Cardiac septum (tissue), 1 donor: ENCODE measurements at regions of chr1 and their contacts with region 1.

Region 1: DNA sequence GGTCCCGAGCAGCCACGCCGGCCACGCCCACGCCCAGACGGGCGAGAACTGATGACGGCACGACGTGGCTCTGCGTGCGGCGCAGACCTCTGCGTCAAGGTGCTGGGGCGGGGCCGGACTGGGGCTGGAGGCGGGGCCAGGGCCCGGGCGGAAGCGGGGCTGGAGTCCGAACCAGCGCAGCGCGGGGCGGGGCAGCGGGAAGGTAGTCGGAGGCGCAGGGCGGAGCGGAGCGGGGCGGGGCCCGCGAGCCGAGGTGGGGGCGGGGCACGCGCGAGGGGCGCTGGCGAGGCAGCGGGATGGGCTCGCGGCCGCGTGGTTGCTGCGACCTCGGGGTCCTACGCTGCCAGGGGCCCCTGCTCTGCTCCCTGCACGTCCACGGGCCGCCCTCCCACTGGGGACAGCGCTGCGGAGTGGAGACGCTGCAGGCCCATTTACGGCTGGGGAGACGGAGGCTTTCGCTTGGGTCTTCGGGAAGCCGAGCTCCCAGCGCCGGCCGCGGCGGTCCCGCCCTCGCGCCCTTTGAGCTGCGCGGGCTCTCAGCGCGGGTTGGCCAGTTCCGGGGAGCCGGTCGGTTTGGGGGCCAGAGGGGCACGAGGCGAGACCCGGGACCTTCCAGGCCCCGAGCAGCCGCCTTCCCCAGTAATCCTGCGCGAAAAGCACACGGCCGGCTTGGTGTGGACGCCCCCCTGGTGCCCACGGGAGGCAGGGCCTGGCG is at the start of gene PEX10:
- DNase-seq: peak; percentile 99
- total RNA-seq, gene PEX10: 18.1 TPM

Region 2: GRCh38 chr1:2360588-2361364 is 51.9 kb before region 1 on chr1:
- intact Hi-C with region 1: no loop called
- DNase-seq: peak; percentile 17

Region 3: DNA sequence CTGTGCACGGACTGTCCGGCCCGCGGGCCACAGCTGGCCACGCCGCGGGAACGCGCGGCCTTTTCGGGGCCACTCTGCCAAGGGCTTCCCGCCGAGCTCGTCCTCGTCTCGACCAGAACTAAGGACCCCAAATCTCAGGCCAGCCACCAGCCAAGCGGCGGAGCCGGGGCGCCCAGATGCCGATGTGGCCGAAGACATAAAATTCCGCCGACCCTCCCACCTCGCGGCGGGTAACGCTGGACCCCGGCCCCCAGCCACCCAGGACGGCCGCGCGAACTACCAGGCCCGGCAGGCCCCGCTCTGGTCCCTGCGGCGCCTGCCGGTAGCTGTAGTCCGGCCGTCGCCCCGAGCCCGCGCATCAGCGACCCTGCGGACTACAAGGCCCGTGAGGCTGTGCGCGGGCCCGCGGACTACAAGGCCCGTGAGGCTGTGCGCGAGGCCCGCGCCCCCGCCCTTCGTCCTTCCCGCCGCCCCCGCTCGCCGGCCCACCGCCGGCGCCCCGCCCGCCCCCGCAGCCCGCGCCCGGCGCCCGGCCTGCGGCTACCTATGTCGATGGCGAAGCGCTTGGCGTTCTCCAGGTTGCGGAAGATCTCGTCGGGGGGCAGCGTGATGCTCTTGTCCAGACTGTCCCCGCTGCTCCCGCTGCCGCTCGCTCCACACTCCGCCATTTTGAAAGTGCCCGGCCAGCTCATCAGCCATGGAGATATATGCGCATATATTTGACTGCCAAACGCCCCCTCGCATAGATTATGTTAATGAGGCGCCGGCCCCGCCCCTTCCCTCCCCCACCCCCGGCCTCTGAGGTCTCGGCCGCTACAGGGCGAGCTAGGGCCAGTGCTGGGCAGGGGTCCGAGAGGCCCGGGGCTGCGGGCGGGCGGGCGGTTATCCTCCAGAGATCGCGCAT is 113.5 kb after region 1 on chr1 and contains the start of gene PANK4:
- intact Hi-C with region 1: loop called (anchors 1 kb)
- DNase-seq: peak; percentile 95
- total RNA-seq, gene PANK4: 37.1 TPM

Region 4: DNA sequence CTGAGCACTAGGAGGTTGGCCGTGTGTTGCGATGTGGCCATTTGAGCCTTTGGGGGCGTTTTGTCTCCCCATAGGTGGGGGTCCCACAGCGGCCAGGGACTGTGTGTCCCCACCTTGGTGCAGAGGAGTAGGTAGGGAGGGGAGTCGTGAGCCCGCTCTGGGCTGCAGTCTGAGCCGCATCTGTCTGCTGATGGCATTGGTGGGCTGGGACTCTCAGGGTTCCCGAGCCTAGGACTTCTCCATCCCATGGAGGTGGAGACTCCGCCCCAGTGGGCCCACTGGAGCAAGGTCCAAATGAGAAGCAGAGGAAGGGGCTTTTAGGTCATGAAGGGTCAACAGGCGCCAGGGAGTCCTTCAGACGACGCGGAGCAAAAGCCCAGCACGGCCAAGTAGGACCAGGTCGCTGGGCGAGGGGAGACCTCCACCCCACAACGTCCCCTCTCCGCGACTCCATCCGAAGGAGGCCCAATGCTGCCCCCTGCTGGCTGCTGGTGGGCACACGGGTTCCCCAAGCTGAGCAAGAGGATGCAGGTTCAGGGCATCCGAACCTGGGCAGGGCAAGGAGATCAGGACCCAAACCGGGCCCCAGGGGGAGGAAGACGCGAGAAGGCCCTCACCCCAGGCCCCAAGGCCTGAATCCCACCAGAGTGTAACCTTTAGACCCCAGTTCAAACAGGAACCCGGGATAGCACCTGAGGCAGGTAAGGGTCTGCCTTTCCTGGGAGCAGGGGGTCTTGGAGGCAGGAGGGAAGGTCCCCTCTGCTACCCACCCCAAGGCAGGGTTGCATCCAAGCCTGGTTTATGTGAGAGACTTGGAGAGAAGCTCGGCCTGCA is 373.9 kb after region 1 on chr1:
- intact Hi-C with region 1: loop called (anchors 2 kb)
- DNase-seq: peak; percentile 76